ENCODE measurements at regions of chr18 and their contacts with region 1.

Region 1: DNA sequence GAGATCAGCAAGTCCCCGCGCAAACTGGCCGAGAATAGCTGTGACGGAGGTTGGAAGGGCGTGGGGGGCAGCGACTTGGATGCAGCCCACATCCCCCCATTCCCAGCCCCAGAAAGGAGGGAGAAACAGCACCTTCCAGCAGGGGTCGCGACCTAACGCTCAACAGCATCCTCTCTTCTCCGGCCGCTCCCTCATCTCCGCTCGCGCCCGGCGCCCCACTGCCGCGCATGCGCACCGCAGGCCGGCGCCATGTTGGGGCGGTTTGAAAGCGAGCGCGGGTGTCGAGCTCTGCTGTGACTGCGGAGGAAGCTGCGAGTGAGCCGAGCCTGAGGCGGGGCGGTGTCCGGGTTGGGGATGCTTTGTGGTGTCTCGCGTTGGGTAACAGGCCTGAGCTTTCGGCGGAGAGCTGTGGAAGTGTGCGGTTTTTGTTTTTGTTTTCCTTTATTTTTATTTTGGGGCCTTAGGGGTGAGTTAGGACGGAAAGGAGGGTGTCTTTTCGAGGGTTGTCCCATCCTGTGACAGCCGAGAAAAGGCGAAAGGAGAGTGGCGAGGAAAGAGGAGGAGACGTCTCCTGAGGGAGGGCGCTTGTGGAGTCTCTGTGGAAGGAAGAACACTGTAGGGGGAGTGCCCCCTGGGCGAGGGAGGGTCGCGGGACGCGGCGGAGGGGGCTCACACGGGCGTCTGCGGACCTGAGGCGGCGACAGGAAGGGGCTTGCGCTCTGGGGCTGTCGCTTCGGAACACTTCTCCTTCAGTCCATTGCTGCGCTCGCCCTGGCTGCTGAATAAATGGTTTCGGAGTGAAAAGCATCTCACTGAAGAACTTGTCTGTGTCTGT is at the starts of genes C18orf54 and STARD6:
- DNase-seq: peak; percentile 85 to 91 (median 89)
- H3K4me3 ChIP-seq: peak within 1 kb of the TSS; percentile 66 to 97 (median 86)
- H3K4me3 Mint-ChIP-seq: peak within 1 kb of the TSS; percentile 98 to 100
- H3K27ac ChIP-seq: peak within 1 kb of the TSS; percentile 56 to 84
- H3K27ac Mint-ChIP-seq: peak within 1 kb of the TSS; percentile 83 to 98 (median 95)
- H3K4me1 ChIP-seq: peaks cover 9 to 17% of the 10 kb centered on the region in 2 donors
- H3K4me1 Mint-ChIP-seq: peaks cover 14% of the 10 kb centered on the region
- H3K27me3 ChIP-seq: peaks cover 0 to 3% of the 10 kb centered on the region in 2 donors
- H3K27me3 Mint-ChIP-seq: peaks cover 2 to 5% (median 4%) of the 10 kb centered on the region in 3 donors
- CTCF ChIP-seq: peak; percentile 46
- polyA plus RNA-seq, gene C18orf54: 0.14 to 0.38 (median 0.29) TPM
- polyA plus RNA-seq, gene STARD6: not detected

Region 2: DNA sequence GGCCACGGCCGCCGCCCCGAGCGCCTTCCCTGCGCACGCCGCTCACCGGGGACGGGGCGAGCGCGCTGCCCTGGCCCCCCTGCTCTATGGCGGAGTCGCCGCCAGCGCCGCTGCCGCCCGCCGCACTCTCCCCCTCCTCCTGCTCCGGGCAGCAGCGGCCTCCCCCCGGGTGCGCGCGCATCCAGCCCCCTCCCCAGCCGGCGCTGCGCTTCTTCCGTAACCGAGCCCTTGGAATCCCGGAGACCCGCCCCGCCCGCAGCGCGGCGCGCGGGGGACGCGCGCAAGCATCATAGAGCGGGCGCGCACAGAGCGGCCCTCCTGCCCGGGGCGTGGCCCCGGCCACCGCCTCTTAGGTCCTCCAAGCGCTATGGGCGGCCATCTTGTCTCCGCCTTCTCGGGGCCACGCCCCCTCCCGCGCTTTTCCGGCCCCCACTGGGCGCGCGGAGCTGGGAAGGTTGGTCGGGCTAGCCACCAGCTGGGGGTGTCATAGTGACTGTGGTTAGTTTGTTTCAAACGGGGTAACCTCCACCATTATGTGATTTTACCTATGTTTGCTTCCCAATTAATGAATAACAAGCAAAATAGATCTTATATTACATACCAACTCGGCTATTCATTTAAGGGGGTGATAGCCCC is 133.4 kb before region 1 on chr18 and contains the start of gene MBD2:
- intact Hi-C with region 1: loop called (anchors 5 to 10 kb)
- DNase-seq: peak; percentile 91 to 96 (median 94)
- H3K4me3 ChIP-seq: peak within 1 kb of the TSS; percentile 72 to 91 (median 84)
- H3K4me3 Mint-ChIP-seq: peak within 1 kb of the TSS; percentile 92 to 93
- H3K27ac ChIP-seq: peak within 1 kb of the TSS; percentile 68 to 78
- H3K27ac Mint-ChIP-seq: peak within 1 kb of the TSS; percentile 85 to 96 (median 92)
- H3K4me1 ChIP-seq: peaks cover 25 to 42% of the 10 kb centered on the region in 2 donors
- H3K4me1 Mint-ChIP-seq: peaks cover 44% of the 10 kb centered on the region
- H3K27me3 ChIP-seq: no peaks in the 10 kb centered on the region
- H3K27me3 Mint-ChIP-seq: peaks cover 0 to 2% (median 0%) of the 10 kb centered on the region in 3 donors
- CTCF ChIP-seq: no peak
- polyA plus RNA-seq, gene MBD2: 11.6 to 64.9 (median 25.2) TPM

Region 3: GRCh38 chr18:54269893-54270844 is 87.7 kb before region 1 on chr18:
- intact Hi-C with region 1: loop called in 1 of 2 experiments (anchors 10 kb)
- DNase-seq: peak; percentile 68 to 74 (median 69)
- H3K4me3 ChIP-seq: peak overlapping the region; percentile 67 to 86 (median 68)
- H3K4me3 Mint-ChIP-seq: peak overlapping the region; percentile 85 to 89
- H3K27ac ChIP-seq: peak overlapping the region; percentile 93 to 97
- H3K27ac Mint-ChIP-seq: peak overlapping the region; percentile 94 to 98 (median 97)
- H3K4me1 ChIP-seq: peaks cover 24 to 25% of the 10 kb centered on the region in 2 donors
- H3K4me1 Mint-ChIP-seq: peaks cover 38% of the 10 kb centered on the region
- H3K27me3 ChIP-seq: no peaks in the 10 kb centered on the region
- H3K27me3 Mint-ChIP-seq: no peaks in the 10 kb centered on the region
- CTCF ChIP-seq: peak; percentile 72

Region 4: DNA sequence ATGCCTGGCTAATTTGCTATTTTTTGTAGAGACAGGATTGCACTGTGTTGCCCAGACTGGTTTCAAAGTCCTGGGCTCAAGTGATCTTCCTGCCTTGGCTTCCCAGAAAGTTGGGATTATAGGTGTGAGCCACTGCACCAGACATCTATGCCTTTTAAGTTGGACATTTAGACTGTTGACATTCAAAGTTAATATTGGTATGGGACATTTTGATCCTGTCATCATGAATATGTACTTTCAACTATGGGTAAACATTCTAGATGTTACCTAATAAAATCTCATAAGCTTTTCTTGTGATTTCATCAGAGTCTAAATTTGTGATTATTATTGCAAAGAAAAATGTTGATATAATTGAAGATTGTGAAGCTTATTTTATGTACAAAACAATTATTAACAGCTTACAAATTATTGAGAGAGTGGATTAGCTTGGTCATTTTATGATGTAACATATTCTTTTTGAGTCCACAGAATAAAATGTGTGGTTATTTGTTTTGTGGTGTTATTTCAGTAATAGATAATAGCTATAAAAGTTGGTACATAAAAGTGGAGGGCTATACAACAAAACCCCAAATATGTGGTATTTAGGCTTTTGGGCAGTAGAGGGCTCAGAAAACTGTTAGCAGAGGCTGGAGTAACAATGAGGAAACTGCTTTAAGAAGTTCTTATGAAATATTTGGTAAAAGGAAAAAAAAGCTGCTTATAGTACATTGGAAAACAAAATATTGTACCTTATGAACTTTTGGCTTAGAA is 41.6 kb before region 1 on chr18:
- intact Hi-C with region 1: no loop called
- DNase-seq: no peak
- H3K4me3 ChIP-seq: no peak overlapping the region
- H3K4me3 Mint-ChIP-seq: no peak overlapping the region
- H3K27ac ChIP-seq: no peak overlapping the region
- H3K27ac Mint-ChIP-seq: no peak overlapping the region
- H3K4me1 ChIP-seq: no peaks in the 10 kb centered on the region
- H3K4me1 Mint-ChIP-seq: no peaks in the 10 kb centered on the region
- H3K27me3 ChIP-seq: peaks cover 0 to 2% of the 10 kb centered on the region in 2 donors
- H3K27me3 Mint-ChIP-seq: peaks cover 2 to 3% (median 2%) of the 10 kb centered on the region in 3 donors
- CTCF ChIP-seq: no peak

Region 5: DNA sequence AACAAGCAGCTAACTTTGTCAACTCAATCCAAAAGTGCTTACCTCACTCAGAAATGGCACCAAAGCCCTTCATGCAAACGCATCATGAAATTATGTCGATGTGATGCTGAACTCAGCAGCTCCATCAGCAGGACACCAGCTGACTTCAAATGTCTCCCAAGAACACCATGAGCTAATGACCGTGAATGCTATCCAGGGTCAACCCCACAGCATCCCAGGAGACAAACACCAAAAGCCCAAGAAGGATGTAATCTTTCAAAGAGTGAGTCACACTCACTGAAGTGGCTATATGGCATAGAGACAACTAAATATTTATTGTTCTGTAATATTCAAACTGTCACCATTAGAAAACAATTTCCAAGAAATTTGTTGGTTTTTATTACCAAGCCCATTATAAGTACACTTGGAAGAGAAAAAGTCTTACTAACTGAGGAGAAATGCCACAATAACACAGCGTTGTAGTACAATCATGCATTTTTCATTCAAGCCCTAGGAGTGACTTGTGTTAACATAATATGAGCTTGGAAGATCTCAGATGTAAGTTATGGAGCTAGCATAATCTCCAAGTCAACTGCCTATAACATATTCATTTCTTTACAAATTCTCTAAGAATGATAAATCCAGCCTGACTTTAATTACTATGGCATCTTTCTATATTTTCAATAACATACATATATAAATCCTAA is 766.3 kb after region 1 on chr18:
- intact Hi-C with region 1: no loop called
- DNase-seq: no peak
- H3K4me3 ChIP-seq: no peak overlapping the region
- H3K4me3 Mint-ChIP-seq: no peak overlapping the region
- H3K27ac ChIP-seq: no peak overlapping the region
- H3K27ac Mint-ChIP-seq: no peak overlapping the region
- H3K4me1 ChIP-seq: no peaks in the 10 kb centered on the region
- H3K4me1 Mint-ChIP-seq: no peaks in the 10 kb centered on the region
- H3K27me3 ChIP-seq: no peaks in the 10 kb centered on the region
- H3K27me3 Mint-ChIP-seq: peaks cover 0 to 4% (median 4%) of the 10 kb centered on the region in 3 donors
- CTCF ChIP-seq: no peak